A673 (cell line): ENCODE measurements at regions of chr18 and their contacts with region 1.

Region 1: GRCh38 chr18:231563-231962 is 36.3 kb downstream of the THOC1 start:
- DNase-seq: no peak
- H3K4me3 ChIP-seq: no peak overlapping the region
- H3K27ac ChIP-seq: no peak overlapping the region
- H3K4me1 ChIP-seq: no peaks in the 10 kb centered on the region
- H3K27me3 ChIP-seq: no peaks in the 10 kb centered on the region
- CTCF ChIP-seq: no peak

Region 2: GRCh38 chr18:136433-136832 is 95.1 kb before region 1 on chr18:
- CTCF ChIA-PET with region 1: no interaction called
- POLR2A ChIA-PET with region 1: no interaction called
- intact Hi-C with region 1: no loop called
- DNase-seq: peak; percentile 14
- H3K4me3 ChIP-seq: no peak overlapping the region
- H3K27ac ChIP-seq: no peak overlapping the region
- H3K4me1 ChIP-seq: no peaks in the 10 kb centered on the region
- H3K27me3 ChIP-seq: no peaks in the 10 kb centered on the region
- CTCF ChIP-seq: no peak

Region 3: GRCh38 chr18:275486-275885 is 43.9 kb after region 1 on chr18:
- CTCF ChIA-PET with region 1: no interaction called
- POLR2A ChIA-PET with region 1: interaction called, 12 read pairs
- intact Hi-C with region 1: no loop called
- DNase-seq: no peak
- H3K4me3 ChIP-seq: no peak overlapping the region
- H3K27ac ChIP-seq: no peak overlapping the region
- H3K4me1 ChIP-seq: no peaks in the 10 kb centered on the region
- H3K27me3 ChIP-seq: no peaks in the 10 kb centered on the region
- CTCF ChIP-seq: no peak